OCI-LY7 (cell line): ENCODE measurements at regions of chr10 and their contacts with region 1.

Region 1: DNA sequence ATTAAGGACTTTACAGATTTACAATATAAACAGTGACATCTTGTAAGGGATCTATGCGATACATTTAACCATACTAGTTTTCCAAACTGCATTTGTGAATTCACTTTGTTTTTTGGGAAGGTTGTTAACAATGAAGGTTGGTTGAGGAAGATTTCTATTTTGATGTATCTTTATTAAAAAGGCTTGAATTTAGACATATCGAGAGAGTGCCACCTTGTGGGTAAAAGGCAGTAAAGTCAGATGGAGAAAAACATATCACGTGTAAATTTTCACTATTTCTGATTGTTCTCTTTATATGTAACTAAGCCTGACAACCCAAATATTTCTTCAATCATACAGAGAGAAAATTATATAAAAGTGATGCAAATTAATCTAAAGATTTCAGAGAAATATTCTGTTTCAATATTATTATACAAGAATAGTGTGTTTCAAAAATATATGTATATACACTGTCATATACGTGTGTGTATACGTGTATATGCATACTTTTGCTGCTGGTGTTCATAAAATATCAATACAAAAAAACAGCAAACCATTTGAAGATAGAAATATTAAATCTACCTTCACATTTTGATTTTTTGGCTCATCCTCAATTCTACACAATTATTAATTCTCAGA is 988.6 kb downstream of the SORCS1 start:
- DNase-seq: peak; percentile 14
- H3K4me3 ChIP-seq: no peak overlapping the region
- H3K27ac ChIP-seq: no peak overlapping the region
- H3K4me1 ChIP-seq: no peaks in the 10 kb centered on the region
- CTCF ChIP-seq: peak; percentile 82

Region 2: GRCh38 chr10:105797234-105797890 is 378.5 kb before region 1 on chr10:
- CTCF ChIA-PET with region 1: no interaction called
- POLR2A ChIA-PET with region 1: no interaction called
- intact Hi-C with region 1: loop called (anchors 5 kb)
- DNase-seq: peak; percentile 34
- H3K4me3 ChIP-seq: no peak overlapping the region
- H3K27ac ChIP-seq: no peak overlapping the region
- H3K4me1 ChIP-seq: no peaks in the 10 kb centered on the region
- CTCF ChIP-seq: peak; percentile 79

Region 3: GRCh38 chr10:105950410-105950809 is 225.5 kb before region 1 on chr10:
- CTCF ChIA-PET with region 1: no interaction called
- POLR2A ChIA-PET with region 1: no interaction called
- intact Hi-C with region 1: loop called (anchors 1 kb)
- DNase-seq: peak; percentile 60
- H3K4me3 ChIP-seq: no peak overlapping the region
- H3K27ac ChIP-seq: no peak overlapping the region
- H3K4me1 ChIP-seq: peaks cover 6% of the 10 kb centered on the region
- CTCF ChIP-seq: peak; percentile 89

Region 4: GRCh38 chr10:106387063-106387462 is 211.2 kb after region 1 on chr10:
- CTCF ChIA-PET with region 1: no interaction called
- POLR2A ChIA-PET with region 1: no interaction called
- intact Hi-C with region 1: no loop called
- DNase-seq: no peak
- H3K4me3 ChIP-seq: no peak overlapping the region
- H3K27ac ChIP-seq: no peak overlapping the region
- H3K4me1 ChIP-seq: no peaks in the 10 kb centered on the region
- CTCF ChIP-seq: no peak